A673 (cell line): ENCODE measurements at regions of chr9 and their contacts with region 1.

Region 1: GRCh38 chr9:131366761-131367401 is 27.0 kb upstream of the PRRC2B start:
- DNase-seq: peak; percentile 55
- H3K4me3 ChIP-seq: no peak overlapping the region
- H3K27ac ChIP-seq: no peak overlapping the region
- H3K4me1 ChIP-seq: peaks cover 5% of the 10 kb centered on the region
- H3K27me3 ChIP-seq: no peaks in the 10 kb centered on the region
- CTCF ChIP-seq: peak; percentile 39

Region 2: DNA sequence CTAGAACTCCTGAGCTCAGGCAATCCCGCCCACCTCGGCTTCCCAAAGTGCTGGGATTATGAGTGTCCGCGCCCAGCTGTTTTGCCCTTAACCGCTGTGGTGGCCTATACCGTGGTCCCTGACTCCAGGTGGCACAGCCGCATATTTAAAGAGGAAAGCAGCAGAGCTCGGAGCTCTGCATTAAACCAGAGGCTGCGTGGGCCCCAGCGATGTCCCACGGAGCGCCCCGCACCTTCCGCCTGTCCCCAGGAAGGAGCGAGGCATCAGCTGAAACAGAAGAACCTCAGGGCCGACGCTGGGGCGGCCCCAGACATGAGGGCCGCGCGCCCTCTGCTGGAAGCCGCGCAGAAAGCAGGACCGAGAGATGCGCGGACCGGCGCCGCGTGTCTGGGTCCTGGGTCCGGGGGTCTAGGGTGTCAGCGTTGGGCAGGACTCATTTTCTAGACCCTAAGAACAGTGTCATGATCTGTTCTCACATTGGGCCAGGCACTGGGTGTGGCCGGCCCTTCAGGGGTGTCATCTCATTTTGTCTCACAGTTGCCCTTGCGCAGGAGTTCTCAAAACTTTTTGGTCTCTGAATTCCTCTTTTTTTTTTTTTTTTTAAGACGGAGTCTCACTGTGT is 320.2 kb before region 1 on chr9:
- CTCF ChIA-PET with region 1: no interaction called
- POLR2A ChIA-PET with region 1: no interaction called
- intact Hi-C with region 1: no loop called
- DNase-seq: peak; percentile 82
- H3K4me3 ChIP-seq: no peak overlapping the region
- H3K27ac ChIP-seq: no peak overlapping the region
- H3K4me1 ChIP-seq: no peaks in the 10 kb centered on the region
- H3K27me3 ChIP-seq: no peaks in the 10 kb centered on the region
- CTCF ChIP-seq: peak; percentile 97

Region 3: DNA sequence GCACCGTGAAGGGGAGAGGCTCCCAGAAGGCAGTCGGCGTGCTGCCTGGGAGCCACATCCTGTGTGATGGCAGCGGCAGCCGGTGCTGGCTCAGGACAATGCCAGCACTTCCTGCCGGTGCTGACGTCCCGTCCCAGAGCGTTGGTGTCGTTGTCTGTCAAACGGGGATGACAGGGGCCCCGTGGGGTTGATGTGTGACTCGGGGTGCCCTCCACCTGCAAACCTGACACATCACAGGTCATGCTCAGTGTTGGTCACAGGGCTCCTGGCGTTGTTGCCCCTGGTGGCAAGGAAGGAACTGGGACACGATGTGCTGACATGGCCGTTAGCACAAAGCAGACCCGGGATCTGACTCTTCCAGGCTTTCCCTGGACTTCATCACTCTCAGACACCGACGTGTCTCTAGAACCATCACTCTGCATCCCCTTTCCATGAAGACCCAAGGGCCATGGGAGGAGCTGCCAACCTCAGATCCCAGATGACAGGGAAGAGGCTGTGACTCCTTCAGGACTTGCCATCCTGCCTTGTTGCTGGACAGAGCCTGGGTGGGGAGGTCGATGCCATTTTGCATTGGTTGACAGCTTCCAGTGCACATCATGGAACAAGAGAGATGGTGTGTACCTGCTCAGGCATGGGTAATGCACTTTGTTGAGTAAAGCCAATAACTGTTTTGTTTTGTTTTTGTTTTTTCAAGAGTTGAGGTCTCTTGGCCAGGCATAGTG is 55.9 kb before region 1 on chr9:
- CTCF ChIA-PET with region 1: no interaction called
- POLR2A ChIA-PET with region 1: interaction called, 12 read pairs
- intact Hi-C with region 1: no loop called
- DNase-seq: no peak
- H3K4me3 ChIP-seq: no peak overlapping the region
- H3K27ac ChIP-seq: no peak overlapping the region
- H3K4me1 ChIP-seq: no peaks in the 10 kb centered on the region
- H3K27me3 ChIP-seq: no peaks in the 10 kb centered on the region
- CTCF ChIP-seq: no peak